Calu3 (cell line): ENCODE measurements at regions of chr10 and their contacts with region 1.

Region 1: DNA sequence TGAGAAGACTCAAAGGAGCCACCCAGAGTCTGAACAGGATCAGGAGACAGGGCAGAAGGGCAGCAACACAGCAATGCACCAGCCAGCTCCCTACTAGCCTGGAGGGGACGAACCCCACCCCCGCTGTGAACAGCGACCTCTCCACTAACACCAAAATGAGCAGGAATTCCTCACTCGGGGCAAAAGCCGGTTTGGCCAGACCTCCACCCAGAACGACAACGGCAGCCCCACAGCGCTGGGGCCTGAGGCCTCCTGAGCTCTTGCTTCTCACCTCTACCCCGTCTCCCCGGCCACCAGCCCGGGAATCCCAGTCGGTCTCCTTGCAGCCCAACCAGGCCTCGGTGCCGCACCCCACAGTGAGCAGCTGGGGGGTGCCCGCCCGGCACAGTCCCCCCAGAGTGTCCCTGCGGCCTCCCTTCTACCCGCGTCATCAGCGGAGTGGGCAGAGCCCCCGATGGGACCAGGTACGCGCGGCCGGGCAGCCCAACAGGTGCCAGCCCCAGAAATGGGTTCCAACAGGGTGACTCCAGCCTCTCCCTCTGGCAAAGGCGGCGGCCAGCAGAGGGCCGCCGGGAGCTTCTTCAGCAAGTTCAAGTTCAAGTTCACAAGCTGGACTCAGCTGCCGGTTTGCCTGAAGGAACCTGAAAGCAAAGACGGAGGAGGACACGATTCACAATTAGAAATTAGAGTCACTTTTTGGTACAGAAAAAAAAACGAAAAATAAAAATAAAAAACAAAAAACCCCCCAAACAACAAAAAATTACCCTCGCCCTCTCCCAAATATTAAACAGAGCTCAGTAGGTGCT is 129.0 kb downstream of the MARCHF5 start:
- DNase-seq: no peak
- H3K4me3 Mint-ChIP-seq: no peak overlapping the region
- H3K27ac Mint-ChIP-seq: no peak overlapping the region
- H3K4me1 Mint-ChIP-seq: no peaks in the 10 kb centered on the region
- H3K27me3 Mint-ChIP-seq: no peaks in the 10 kb centered on the region
- CTCF ChIP-seq: no peak

Region 2: GRCh38 chr10:92313750-92314149 is 106.2 kb before region 1 on chr10:
- CTCF ChIA-PET with region 1: no interaction called
- intact Hi-C with region 1: no loop called
- DNase-seq: no peak
- H3K4me3 Mint-ChIP-seq: no peak overlapping the region
- H3K27ac Mint-ChIP-seq: no peak overlapping the region
- H3K4me1 Mint-ChIP-seq: no peaks in the 10 kb centered on the region
- H3K27me3 Mint-ChIP-seq: no peaks in the 10 kb centered on the region
- CTCF ChIP-seq: no peak

Region 3: DNA sequence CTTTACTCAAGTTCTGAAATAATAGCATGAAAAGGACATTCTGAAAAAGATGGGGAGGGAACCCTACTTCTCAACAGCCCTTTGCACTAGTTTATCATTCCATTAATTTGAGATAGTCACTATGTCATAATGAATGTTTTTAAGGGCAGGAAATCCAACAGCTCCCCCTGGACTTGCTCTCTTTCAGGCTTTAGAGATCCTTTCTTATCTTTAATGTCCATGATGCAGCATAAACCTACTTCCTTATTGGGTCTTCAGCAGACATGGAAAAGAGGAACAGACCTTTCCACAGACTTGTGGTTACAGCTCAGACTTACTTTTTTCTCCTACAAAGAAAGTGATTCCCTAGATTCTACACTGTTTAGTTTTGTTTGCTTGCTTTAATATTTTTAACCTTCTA is 66.7 kb after region 1 on chr10:
- CTCF ChIA-PET with region 1: interaction called, 10 read pairs
- intact Hi-C with region 1: no loop called
- DNase-seq: no peak
- H3K4me3 Mint-ChIP-seq: no peak overlapping the region
- H3K27ac Mint-ChIP-seq: no peak overlapping the region
- H3K4me1 Mint-ChIP-seq: no peaks in the 10 kb centered on the region
- H3K27me3 Mint-ChIP-seq: no peaks in the 10 kb centered on the region
- CTCF ChIP-seq: no peak